Ascending aorta (tissue), 2 donors: ENCODE measurements at regions of chr5 and their contacts with region 1.

Region 1: GRCh38 chr5:150436141-150436680 is 13.3 kb downstream of the RPS14 start:
- DNase-seq: peak; percentile 40 to 95
- H3K4me3 ChIP-seq: peak overlapping the region in 1 of 2 donors; percentile 29
- H3K27ac ChIP-seq: no peak overlapping the region
- H3K4me1 ChIP-seq: peaks cover 0 to 3% of the 10 kb centered on the region in 2 donors
- H3K27me3 ChIP-seq: no peaks in the 10 kb centered on the region
- CTCF ChIP-seq: peak; percentile 72 to 89 (median 77)

Region 2: GRCh38 chr5:150398722-150399523 is 37.3 kb before region 1 on chr5:
- intact Hi-C with region 1: loop called (anchors 5 kb)
- DNase-seq: no peak
- H3K4me3 ChIP-seq: no peak overlapping the region
- H3K27ac ChIP-seq: no peak overlapping the region
- H3K4me1 ChIP-seq: no peaks in the 10 kb centered on the region
- H3K27me3 ChIP-seq: no peaks in the 10 kb centered on the region
- CTCF ChIP-seq: peak in 1 of 3 experiments; percentile 5

Region 3: GRCh38 chr5:150473673-150474358 is 37.6 kb after region 1 on chr5:
- intact Hi-C with region 1: no loop called
- DNase-seq: no peak
- H3K4me3 ChIP-seq: no peak overlapping the region
- H3K27ac ChIP-seq: no peak overlapping the region
- H3K4me1 ChIP-seq: no peaks in the 10 kb centered on the region
- H3K27me3 ChIP-seq: no peaks in the 10 kb centered on the region
- CTCF ChIP-seq: no peak